ENCODE measurements at regions of chr16 and their contacts with region 1.

Region 1: GRCh38 chr16:75044800-75045430 is 46.1 kb downstream of the ZNRF1 start:
- DNase-seq: peak; percentile 67 to 96
- H3K4me3 ChIP-seq: no peak overlapping the region
- H3K27ac ChIP-seq: peak overlapping the region; percentile 81
- H3K4me1 ChIP-seq: peaks cover 69% of the 10 kb centered on the region
- H3K27me3 ChIP-seq: no peaks in the 10 kb centered on the region
- CTCF ChIP-seq: no peak

Region 2: DNA sequence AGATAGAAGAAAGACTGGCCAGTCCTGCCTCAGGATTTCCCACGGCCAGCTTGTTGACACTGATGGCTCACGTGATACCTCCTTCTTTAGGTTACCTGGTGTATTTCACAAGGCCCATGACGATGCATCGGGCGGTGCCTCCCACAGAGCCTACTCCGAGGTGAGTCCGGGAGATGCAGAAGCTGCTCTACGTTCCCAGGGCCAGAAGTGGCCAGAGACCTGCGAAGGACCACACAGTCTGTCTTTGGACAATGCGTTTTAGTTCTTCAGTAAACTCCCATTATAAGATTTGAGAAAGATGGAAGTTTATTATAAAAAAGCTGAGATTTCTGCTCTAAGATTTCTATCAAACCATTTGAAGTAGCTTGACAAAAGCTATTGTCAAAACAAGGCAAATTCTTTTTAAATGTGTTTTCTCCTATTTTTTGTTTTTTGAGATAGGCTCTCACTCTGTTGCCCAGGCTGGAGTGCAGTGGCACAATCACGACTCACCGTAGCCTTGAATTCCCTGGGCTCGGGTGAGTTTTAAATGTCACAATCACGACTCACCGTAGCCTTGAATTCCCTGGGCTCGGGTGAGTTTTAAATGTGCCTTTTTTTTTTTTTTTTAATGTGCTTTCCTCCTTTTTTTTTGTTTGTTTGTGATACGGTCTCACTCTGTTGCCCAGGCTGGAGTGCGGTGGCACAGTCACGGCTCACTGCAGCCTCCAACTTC is 201.0 kb before region 1 on chr16:
- CTCF ChIA-PET with region 1: no interaction called
- POLR2A ChIA-PET with region 1: no interaction called
- intact Hi-C with region 1: no loop called
- DNase-seq: peak; percentile 12 to 49
- H3K4me3 ChIP-seq: peak overlapping the region; percentile 6; the same call in 1 of the 2 replicates
- H3K27ac ChIP-seq: peak overlapping the region; percentile 68
- H3K4me1 ChIP-seq: peaks cover 12% of the 10 kb centered on the region; the same call in 1 of the 2 replicates
- H3K27me3 ChIP-seq: no peaks in the 10 kb centered on the region
- CTCF ChIP-seq: no peak

Region 3: GRCh38 chr16:75029557-75030253 is 15.2 kb before region 1 on chr16:
- CTCF ChIA-PET with region 1: interaction called, 9 read pairs
- POLR2A ChIA-PET with region 1: no interaction called
- intact Hi-C with region 1: loop called (anchors 2 kb)
- DNase-seq: peak; percentile 65 to 91
- H3K4me3 ChIP-seq: no peak overlapping the region
- H3K27ac ChIP-seq: peak overlapping the region; percentile 71
- H3K4me1 ChIP-seq: peaks cover 66% of the 10 kb centered on the region
- H3K27me3 ChIP-seq: no peaks in the 10 kb centered on the region
- CTCF ChIP-seq: no peak

Measured in PC-9 (cell line).